ENCODE measurements at regions of chr12 and their contacts with region 1.

Region 1: DNA sequence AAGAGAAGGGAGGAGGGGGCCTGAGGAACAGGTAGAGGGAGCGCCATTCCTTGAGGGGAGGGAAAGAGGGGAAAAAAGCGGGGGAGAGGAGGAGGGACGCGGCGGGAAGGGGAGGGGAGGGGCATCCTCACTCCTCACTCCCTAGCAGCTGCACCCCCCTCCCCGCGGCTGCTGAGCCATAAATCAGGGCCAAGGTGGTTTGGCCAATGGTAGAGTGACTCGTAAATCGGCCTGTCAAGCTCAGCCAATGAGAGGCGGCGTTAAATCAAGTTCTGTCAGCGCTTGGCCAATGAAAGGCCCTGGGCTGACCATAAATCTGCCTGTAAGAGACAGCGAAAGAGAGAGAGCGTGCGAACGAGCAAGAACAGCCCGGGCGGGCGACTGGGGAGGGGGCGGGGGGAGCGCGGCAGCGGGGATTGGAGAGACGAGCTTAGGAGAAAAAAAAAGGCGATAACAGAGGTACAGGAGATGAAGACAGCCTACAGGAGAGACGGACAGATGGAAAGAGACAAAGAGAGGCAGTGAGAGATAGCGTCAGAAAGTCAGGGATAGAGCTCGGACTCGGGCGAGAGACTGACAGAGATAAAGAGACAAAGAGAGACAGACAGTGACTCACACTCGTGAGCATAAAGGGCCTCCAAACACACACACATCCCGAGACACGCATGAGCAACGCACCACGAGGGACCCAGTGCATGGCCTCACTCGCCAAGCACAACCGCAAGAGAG is 5.1 kb downstream of the GPR84 start:
- DNase-seq: peak; percentile 96
- ATAC-seq: peak; percentile 98
- H3K4me3 ChIP-seq: peak overlapping the region; percentile 56 to 92 (median 85)
- H3K4me3 Mint-ChIP-seq: no peak overlapping the region
- H3K27ac ChIP-seq: peak overlapping the region; percentile 40 to 81
- H3K27ac Mint-ChIP-seq: no peak overlapping the region
- H3K4me1 ChIP-seq: peaks cover 15 to 17% of the 10 kb centered on the region in 2 donors
- H3K4me1 Mint-ChIP-seq: peaks cover 10% of the 10 kb centered on the region
- H3K27me3 ChIP-seq: no peaks in the 10 kb centered on the region
- H3K27me3 Mint-ChIP-seq: no peaks in the 10 kb centered on the region
- CTCF ChIP-seq: no peak

Region 2: GRCh38 chr12:54191550-54192022 is 167.6 kb before region 1 on chr12:
- CTCF ChIA-PET with region 1: no interaction called
- POLR2A ChIA-PET with region 1: no interaction called
- intact Hi-C with region 1: loop called (anchors 1 kb)
- DNase-seq: peak; percentile 90
- ATAC-seq: peak; percentile 64
- H3K4me3 ChIP-seq: no peak overlapping the region
- H3K4me3 Mint-ChIP-seq: no peak overlapping the region
- H3K27ac ChIP-seq: no peak overlapping the region
- H3K27ac Mint-ChIP-seq: peak overlapping the region; percentile 61
- H3K4me1 ChIP-seq: peaks cover 27 to 42% of the 10 kb centered on the region in 2 donors
- H3K4me1 Mint-ChIP-seq: peaks cover 41% of the 10 kb centered on the region
- H3K27me3 ChIP-seq: peaks cover 0 to 42% (median 12%) of the 10 kb centered on the region in 4 experiments
- H3K27me3 Mint-ChIP-seq: peaks cover 35% of the 10 kb centered on the region
- CTCF ChIP-seq: peak; percentile 77

Region 3: GRCh38 chr12:54251667-54252284 is 107.4 kb before region 1 on chr12:
- CTCF ChIA-PET with region 1: interaction called, 14 read pairs
- POLR2A ChIA-PET with region 1: no interaction called
- intact Hi-C with region 1: no loop called
- DNase-seq: peak; percentile 63
- ATAC-seq: peak; percentile 56
- H3K4me3 ChIP-seq: no peak overlapping the region
- H3K4me3 Mint-ChIP-seq: no peak overlapping the region
- H3K27ac ChIP-seq: no peak overlapping the region
- H3K27ac Mint-ChIP-seq: no peak overlapping the region
- H3K4me1 ChIP-seq: peaks cover 0 to 4% of the 10 kb centered on the region in 2 donors
- H3K4me1 Mint-ChIP-seq: peaks cover 6% of the 10 kb centered on the region
- H3K27me3 ChIP-seq: no peaks in the 10 kb centered on the region
- H3K27me3 Mint-ChIP-seq: no peaks in the 10 kb centered on the region
- CTCF ChIP-seq: peak; percentile 77

Region 4: DNA sequence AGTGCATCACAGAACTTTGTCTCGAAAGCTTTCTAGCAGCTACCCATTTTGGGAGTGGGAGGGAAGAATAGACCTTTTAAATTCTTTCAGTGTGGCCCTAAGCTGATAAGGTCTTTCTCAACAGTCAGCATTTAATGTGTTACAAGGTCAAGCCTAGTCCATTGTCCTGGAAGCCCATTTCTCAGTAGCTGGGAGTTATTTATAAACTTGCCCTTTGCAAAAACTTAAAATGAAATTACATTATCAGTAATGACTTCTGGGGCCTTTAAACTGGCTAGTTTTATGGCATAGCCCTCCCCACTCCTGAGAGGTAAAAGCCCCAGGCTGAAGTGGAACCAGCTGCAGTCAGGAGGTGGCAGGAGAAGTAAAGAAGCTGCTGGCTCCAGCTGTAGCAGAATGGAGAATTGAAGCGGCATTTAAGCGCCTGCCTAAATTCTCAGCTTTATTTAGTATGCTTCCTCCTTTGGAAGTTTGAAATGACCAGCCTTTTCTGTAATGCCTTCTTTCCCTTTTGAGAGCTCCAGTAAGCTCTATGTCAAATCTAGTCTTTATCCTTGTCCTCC is 21.8 kb before region 1 on chr12:
- CTCF ChIA-PET with region 1: interaction called, 15 read pairs
- POLR2A ChIA-PET with region 1: no interaction called
- intact Hi-C with region 1: no loop called
- DNase-seq: no peak
- ATAC-seq: no peak
- H3K4me3 ChIP-seq: no peak overlapping the region
- H3K4me3 Mint-ChIP-seq: no peak overlapping the region
- H3K27ac ChIP-seq: no peak overlapping the region
- H3K27ac Mint-ChIP-seq: no peak overlapping the region
- H3K4me1 ChIP-seq: no peaks in the 10 kb centered on the region
- H3K4me1 Mint-ChIP-seq: peaks cover 11% of the 10 kb centered on the region
- H3K27me3 ChIP-seq: no peaks in the 10 kb centered on the region
- H3K27me3 Mint-ChIP-seq: no peaks in the 10 kb centered on the region
- CTCF ChIP-seq: no peak

Region 5: GRCh38 chr12:54526812-54527630 is 167.8 kb after region 1 on chr12:
- CTCF ChIA-PET with region 1: no interaction called
- POLR2A ChIA-PET with region 1: no interaction called
- intact Hi-C with region 1: no loop called
- DNase-seq: peak; percentile 41
- ATAC-seq: no peak
- H3K4me3 ChIP-seq: no peak overlapping the region
- H3K4me3 Mint-ChIP-seq: no peak overlapping the region
- H3K27ac ChIP-seq: no peak overlapping the region
- H3K27ac Mint-ChIP-seq: peak overlapping the region; percentile 43
- H3K4me1 ChIP-seq: no peaks in the 10 kb centered on the region
- H3K4me1 Mint-ChIP-seq: peaks cover 4% of the 10 kb centered on the region
- H3K27me3 ChIP-seq: no peaks in the 10 kb centered on the region
- H3K27me3 Mint-ChIP-seq: no peaks in the 10 kb centered on the region
- CTCF ChIP-seq: peak; percentile 64

Measured in B cell (primary cell).